Posterior vena cava (tissue), 2 donors: ENCODE measurements at regions of chr15 and their contacts with region 1.

Region 1: DNA sequence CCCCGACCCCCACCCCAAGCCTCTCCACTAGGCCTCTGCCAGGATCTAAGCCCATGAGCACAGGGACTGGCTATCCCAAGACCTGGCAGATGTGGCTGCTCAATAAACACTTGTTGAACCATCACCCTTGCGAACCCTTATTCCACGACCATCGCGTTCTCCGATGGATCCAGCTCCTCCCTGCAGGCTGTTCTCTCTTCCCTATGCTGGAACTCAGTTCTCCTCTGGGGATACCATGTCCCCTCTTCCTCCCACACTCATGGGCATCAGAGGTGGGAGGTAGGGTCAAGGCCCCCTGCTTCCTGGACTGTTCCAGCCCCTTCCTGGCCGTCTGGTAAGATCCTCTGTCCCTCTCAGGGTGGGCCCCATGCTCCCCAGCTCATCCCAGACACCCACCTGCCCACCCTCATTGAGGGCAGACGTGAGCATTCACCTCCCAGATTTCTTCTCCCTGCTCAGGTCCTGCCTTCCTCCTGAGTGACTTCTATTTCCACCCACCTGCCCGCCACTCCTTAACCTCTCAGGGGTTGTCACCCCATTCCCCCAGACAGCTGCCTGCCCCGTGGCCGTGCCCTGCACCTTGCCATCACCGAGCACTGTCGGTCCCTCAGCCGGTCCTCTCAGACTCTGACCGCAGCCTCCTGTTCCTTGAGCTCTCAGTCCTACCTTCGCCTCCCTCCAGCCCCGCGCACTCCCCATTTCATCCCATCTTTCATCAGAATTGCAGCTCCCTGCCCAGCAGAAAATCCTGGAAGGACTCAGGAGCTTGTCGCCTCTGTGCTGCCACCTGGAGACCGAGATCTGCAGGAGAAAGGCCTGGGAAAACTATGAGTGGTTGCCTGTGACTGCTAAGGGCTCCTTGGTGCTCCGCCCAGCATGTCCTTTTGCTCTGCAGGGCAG is 42.0 kb downstream of the PML start:
- DNase-seq: peak; percentile 78

Region 2: GRCh38 chr15:73231661-73232419 is 804.7 kb before region 1 on chr15:
- intact Hi-C with region 1: loop called in 1 of 2 experiments (anchors 5 kb)
- DNase-seq: no peak

Region 3: DNA sequence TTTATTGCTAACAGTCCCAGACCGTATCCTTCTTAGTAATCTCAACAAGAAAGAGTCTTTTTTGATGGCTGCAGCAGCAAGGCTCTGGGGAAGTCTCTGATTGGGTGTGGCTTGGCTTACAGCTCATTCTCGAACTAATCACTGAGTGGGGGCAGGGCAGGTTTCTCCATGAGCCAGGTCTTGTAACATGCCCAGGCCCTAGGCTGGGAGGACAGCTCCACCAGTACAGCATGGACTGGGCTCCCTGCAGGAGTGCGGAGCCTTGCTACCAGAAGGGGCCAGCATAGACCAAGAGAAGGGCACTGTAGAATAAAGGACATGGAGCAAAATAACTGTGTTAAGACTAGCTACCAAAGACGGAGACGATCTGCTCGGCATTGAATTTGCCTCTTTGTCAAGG is 345.1 kb before region 1 on chr15:
- intact Hi-C with region 1: no loop called
- DNase-seq: peak; percentile 91

Region 4: DNA sequence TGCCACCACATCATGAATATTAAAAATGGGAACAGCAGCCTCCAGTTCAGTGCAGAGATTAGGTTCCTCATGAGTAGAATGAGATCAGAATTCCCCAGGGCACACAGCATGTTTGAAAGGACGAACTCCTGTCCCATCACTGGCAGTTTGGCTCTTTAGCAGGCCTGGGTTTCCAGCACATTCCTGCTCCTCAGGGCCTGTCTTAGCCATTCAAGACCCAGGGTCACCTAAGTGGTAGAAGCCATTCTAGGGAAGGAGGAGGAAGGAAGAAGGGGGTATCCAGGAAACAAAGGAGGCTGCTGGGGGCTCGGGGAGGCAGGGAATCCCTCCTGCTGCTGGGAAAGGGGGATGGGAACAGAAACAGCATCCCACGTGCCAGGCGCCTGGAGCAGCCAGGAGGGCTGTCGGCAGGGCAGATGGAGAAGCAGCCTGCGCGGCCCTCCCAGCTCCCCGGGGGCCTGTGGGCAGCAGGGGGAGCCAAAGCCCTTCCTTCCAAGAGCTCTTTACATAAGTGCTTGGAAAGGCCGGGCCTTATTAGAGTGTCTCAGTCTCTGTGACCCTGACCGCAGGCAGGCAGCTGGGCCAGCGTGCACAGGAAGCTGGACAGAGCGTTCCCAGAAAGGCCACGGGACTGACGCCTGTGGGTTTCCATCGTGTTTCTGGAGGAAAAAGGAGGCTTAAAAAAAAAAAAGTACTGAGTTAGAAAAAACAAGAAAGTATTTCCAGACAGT is 85.5 kb before region 1 on chr15:
- intact Hi-C with region 1: no loop called
- DNase-seq: peak; percentile 98